Gastrocnemius medialis (tissue), 4 donors: ENCODE measurements at regions of chr17 and their contacts with region 1.

Region 1: GRCh38 chr17:9729034-9729650 is 62.2 kb downstream of the DHRS7C start:
- DNase-seq: no peak
- ATAC-seq: peak; percentile 56 to 71
- H3K4me3 ChIP-seq: no peak overlapping the region
- H3K27ac ChIP-seq: no peak overlapping the region
- H3K4me1 ChIP-seq: no peaks in the 10 kb centered on the region
- H3K27me3 ChIP-seq: no peaks in the 10 kb centered on the region
- CTCF ChIP-seq: peak; percentile 82 to 97 (median 90)
- POLR2A ChIP-seq: no peak

Region 2: DNA sequence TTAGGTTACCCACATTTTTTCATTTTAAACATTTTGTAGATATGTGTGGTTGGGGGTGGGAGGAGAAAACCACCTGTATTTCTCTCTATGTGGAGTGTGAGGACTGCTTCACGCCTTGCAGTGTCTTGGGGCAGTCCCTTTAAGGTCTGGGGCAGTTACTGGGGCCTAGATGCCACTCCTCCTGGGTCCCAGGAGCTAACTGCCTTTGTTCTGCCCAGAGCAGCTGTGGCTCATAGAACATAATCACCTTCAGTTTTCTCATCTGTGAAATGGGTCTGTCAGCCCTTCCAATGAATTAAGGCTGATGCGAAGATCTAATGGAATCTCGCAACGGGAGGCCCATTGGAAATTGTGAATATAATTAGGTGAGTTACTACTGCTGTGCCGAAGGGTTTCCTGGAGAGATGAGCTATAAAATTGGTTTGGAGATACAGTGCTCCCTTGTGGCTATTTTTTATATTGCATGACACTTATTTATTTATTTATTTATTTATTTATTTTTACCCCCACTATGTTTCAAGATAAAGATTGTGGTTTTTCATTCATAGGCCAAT is 39.3 kb after region 1 on chr17:
- in situ Hi-C with region 1: no loop called
- intact Hi-C with region 1: loop called (anchors 1 kb)
- DNase-seq: no peak
- ATAC-seq: no peak
- H3K4me3 ChIP-seq: no peak overlapping the region
- H3K27ac ChIP-seq: no peak overlapping the region
- H3K4me1 ChIP-seq: no peaks in the 10 kb centered on the region
- H3K27me3 ChIP-seq: peaks cover 0 to 8% (median 0%) of the 10 kb centered on the region in 3 donors
- CTCF ChIP-seq: peak; percentile 18 to 72 (median 38)
- POLR2A ChIP-seq: no peak

Region 3: GRCh38 chr17:9817086-9817485 is 87.9 kb after region 1 on chr17:
- in situ Hi-C with region 1: no loop called
- intact Hi-C with region 1: no loop called
- DNase-seq: no peak
- ATAC-seq: peak in 1 of 2 donors; percentile 53
- H3K4me3 ChIP-seq: no peak overlapping the region
- H3K27ac ChIP-seq: no peak overlapping the region
- H3K4me1 ChIP-seq: no peaks in the 10 kb centered on the region
- H3K27me3 ChIP-seq: no peaks in the 10 kb centered on the region
- CTCF ChIP-seq: no peak
- POLR2A ChIP-seq: no peak

Region 4: GRCh38 chr17:9875441-9875840 is 146.3 kb after region 1 on chr17:
- in situ Hi-C with region 1: loop called in 1 of 4 experiments (anchors 10 kb)
- intact Hi-C with region 1: loop called (anchors 2 kb)
- DNase-seq: no peak
- ATAC-seq: no peak
- H3K4me3 ChIP-seq: no peak overlapping the region
- H3K27ac ChIP-seq: no peak overlapping the region
- H3K4me1 ChIP-seq: no peaks in the 10 kb centered on the region
- H3K27me3 ChIP-seq: no peaks in the 10 kb centered on the region
- CTCF ChIP-seq: no peak
- POLR2A ChIP-seq: no peak